Caco-2 (cell line): ENCODE measurements at regions of chr17 and their contacts with region 1.

Region 1: DNA sequence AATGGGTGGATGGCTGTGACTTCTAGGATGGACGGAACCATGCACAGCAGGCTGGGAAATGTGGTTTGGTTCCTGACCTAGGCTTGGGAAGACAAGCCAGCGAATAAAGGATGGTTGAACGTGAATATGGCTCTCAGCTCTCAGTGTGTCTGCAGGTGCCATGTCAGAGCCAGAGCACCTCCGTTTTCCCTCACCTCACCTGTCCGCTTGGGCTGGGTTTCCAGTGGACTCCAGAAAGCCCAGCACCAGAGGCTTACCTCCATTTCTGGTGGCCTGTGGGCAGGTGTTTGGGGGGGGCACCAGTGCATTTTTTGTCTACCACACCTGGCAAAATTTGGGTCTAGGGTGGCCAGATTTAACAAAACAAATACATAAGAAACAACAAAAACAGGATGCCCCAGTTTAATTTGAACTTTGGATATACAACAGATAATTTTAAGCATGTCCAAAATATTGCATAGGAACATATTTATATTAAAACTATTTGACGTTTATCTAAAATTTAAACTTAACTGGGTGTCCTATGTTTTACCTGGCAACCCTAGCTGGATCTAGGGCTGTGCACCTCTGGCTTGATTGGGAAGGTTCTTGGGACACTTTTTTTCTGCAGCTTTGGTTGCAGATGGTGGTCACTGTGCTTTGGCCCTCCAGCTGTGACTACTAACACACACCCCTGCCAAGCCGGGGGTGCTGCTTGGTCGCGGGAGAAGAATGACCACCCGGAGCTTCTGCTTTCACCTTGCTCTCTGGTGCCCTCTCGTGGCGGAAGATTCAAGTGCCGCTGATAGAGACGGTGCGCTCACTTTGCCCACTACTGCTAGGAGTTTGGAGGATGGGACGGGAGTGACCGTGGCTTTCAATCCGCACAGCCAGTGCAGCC is 6.3 kb downstream of the SPACA3 start:
- DNase-seq: peak; percentile 87 to 92
- H3K4me3 ChIP-seq: peak overlapping the region; percentile 6
- H3K4me3 Mint-ChIP-seq: peak overlapping the region; percentile 82
- H3K27ac Mint-ChIP-seq: peak overlapping the region; percentile 92
- H3K4me1 ChIP-seq: peaks cover 12% of the 10 kb centered on the region
- H3K4me1 Mint-ChIP-seq: peaks cover 23% of the 10 kb centered on the region
- H3K27me3 ChIP-seq: no peaks in the 10 kb centered on the region
- H3K27me3 Mint-ChIP-seq: no peaks in the 10 kb centered on the region
- CTCF ChIP-seq: peak; percentile 93 to 94

Region 2: GRCh38 chr17:32631341-32632096 is 366.5 kb before region 1 on chr17:
- CTCF ChIA-PET with region 1: no interaction called
- POLR2A ChIA-PET with region 1: no interaction called
- intact Hi-C with region 1: no loop called
- DNase-seq: no peak
- H3K4me3 ChIP-seq: no peak overlapping the region
- H3K4me3 Mint-ChIP-seq: no peak overlapping the region
- H3K27ac Mint-ChIP-seq: no peak overlapping the region
- H3K4me1 ChIP-seq: no peaks in the 10 kb centered on the region
- H3K4me1 Mint-ChIP-seq: no peaks in the 10 kb centered on the region
- H3K27me3 ChIP-seq: no peaks in the 10 kb centered on the region
- H3K27me3 Mint-ChIP-seq: no peaks in the 10 kb centered on the region
- CTCF ChIP-seq: no peak

Region 3: DNA sequence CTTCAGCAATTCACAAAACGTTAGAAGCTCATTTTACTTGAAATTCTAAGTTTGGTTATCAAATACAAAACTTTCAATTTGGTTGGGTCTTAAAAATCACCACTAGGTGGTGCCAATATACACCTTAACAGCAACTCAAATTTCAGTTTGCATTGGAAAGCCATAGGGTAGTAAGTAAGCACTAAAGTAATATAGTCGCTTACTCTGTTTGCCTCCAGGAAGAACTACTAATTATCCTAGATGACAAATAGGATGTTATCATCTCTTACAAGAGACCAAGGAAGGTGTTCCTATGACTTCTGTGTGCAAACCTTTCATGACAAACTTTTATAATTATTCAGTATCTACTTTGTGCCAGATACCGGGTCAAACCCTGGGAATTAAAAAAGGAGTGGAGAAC is 214.4 kb before region 1 on chr17:
- CTCF ChIA-PET with region 1: interaction called, 5 read pairs
- POLR2A ChIA-PET with region 1: no interaction called
- intact Hi-C with region 1: loop called (anchors 1 kb)
- DNase-seq: peak in 1 of 2 experiments; percentile 53
- H3K4me3 ChIP-seq: no peak overlapping the region
- H3K4me3 Mint-ChIP-seq: no peak overlapping the region
- H3K27ac Mint-ChIP-seq: peak overlapping the region; percentile 68
- H3K4me1 ChIP-seq: peaks cover 13% of the 10 kb centered on the region
- H3K4me1 Mint-ChIP-seq: peaks cover 21% of the 10 kb centered on the region
- H3K27me3 ChIP-seq: no peaks in the 10 kb centered on the region
- H3K27me3 Mint-ChIP-seq: no peaks in the 10 kb centered on the region
- CTCF ChIP-seq: peak; percentile 64 to 82

Region 4: DNA sequence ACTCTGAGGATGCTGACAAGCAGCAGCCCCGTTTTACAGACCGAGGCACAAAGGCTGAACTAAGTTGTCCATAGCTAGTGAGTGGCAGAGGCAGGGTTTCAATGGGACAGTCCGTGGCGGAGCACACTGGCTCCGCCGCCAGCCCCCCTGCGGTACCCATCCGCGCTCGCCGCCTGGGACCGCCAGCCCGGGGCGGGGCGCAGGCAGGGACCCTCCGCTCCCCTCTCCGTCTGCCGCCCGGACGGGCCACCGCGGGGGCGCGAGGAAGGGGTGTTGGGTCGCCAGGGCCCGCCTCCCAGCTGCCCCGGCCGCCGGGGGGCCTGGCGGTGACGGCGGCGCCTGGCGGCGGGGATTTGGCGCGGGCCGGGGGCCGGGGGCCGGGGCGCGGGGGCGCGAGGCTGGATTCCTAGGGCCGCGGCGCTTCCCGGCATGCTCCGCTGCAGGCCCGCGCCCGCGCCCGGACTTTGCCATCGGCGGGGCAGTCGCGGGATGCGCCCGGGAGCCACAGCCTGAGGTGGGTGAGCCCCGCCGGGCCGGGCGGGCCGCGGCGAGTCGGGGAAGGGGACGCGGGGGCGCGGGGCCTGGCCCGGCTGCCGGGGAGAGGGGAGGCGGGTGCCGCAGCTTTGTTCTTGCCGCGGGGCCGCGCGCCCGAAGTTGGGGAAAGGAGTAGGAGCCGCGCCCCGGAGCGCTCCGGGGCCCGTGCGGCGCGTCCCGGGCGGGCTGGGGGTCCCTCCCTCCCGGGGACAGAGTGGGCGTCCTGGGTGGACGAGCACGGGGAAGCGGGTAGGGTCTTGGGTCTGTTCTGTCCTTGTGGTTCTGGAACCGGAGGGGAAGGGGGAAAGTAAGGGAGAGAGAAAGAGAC is 70.0 kb before region 1 on chr17 and contains the start of gene TMEM98:
- CTCF ChIA-PET with region 1: interaction called, 5 read pairs
- POLR2A ChIA-PET with region 1: no interaction called
- intact Hi-C with region 1: loop called (anchors 1 kb)
- DNase-seq: peak in 1 of 2 experiments; percentile 82
- H3K4me3 ChIP-seq: peak within 1 kb of the TSS; percentile 77
- H3K4me3 Mint-ChIP-seq: no peak within 1 kb of the TSS
- H3K27ac Mint-ChIP-seq: peak within 1 kb of the TSS; percentile 65
- H3K4me1 ChIP-seq: peaks cover 23% of the 10 kb centered on the region
- H3K4me1 Mint-ChIP-seq: no peaks in the 10 kb centered on the region
- H3K27me3 ChIP-seq: no peaks in the 10 kb centered on the region
- H3K27me3 Mint-ChIP-seq: no peaks in the 10 kb centered on the region
- CTCF ChIP-seq: no peak
- total RNA-seq, gene TMEM98: 189 and 229 TPM in 2 replicates

Region 5: GRCh38 chr17:32943647-32944191 is 54.3 kb before region 1 on chr17:
- CTCF ChIA-PET with region 1: interaction called, 40 read pairs
- POLR2A ChIA-PET with region 1: no interaction called
- intact Hi-C with region 1: loop called (anchors 1 kb)
- DNase-seq: peak; percentile 86 to 94
- H3K4me3 ChIP-seq: no peak overlapping the region
- H3K4me3 Mint-ChIP-seq: peak overlapping the region; percentile 55
- H3K27ac Mint-ChIP-seq: peak overlapping the region; percentile 94
- H3K4me1 ChIP-seq: peaks cover 45% of the 10 kb centered on the region
- H3K4me1 Mint-ChIP-seq: peaks cover 44% of the 10 kb centered on the region
- H3K27me3 ChIP-seq: no peaks in the 10 kb centered on the region
- H3K27me3 Mint-ChIP-seq: no peaks in the 10 kb centered on the region
- CTCF ChIP-seq: no peak

Region 6: DNA sequence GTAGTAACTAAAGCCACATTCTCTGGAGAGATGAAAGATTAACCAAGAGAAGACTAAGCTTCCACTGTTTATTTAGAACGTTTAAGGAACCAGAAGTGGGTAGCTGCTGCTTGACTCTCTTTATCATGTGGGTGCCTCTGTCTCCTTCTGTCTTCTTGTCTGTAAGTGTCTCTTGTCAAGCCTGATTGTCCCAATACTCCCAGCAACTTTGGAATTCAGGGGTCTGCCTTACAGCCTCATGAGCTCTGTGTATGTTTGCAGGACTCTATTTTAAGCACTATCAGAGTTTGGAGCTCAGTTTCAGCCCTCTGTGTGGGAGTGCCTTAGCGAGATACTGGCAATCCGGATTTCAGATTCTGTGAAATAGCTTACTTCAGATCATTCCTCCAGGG is 35.7 kb before region 1 on chr17:
- CTCF ChIA-PET with region 1: interaction called, 9 read pairs
- POLR2A ChIA-PET with region 1: interaction called, 3 read pairs
- intact Hi-C with region 1: loop called (anchors 2 kb)
- DNase-seq: peak; percentile 50 to 56
- H3K4me3 ChIP-seq: no peak overlapping the region
- H3K4me3 Mint-ChIP-seq: peak overlapping the region; percentile 29
- H3K27ac Mint-ChIP-seq: peak overlapping the region; percentile 61
- H3K4me1 ChIP-seq: peaks cover 47% of the 10 kb centered on the region
- H3K4me1 Mint-ChIP-seq: peaks cover 65% of the 10 kb centered on the region
- H3K27me3 ChIP-seq: no peaks in the 10 kb centered on the region
- H3K27me3 Mint-ChIP-seq: no peaks in the 10 kb centered on the region
- CTCF ChIP-seq: no peak